ENCODE measurements at regions of chr19 and their contacts with region 1.

Region 1: GRCh38 chr19:39328046-39328705 is 7.5 kb upstream of the LRFN1 start:
- DNase-seq: peak; percentile 86
- ATAC-seq: peak; percentile 72
- H3K4me3 Mint-ChIP-seq: no peak overlapping the region
- H3K27ac Mint-ChIP-seq: peak overlapping the region; percentile 34
- H3K4me1 Mint-ChIP-seq: peaks cover 32% of the 10 kb centered on the region
- H3K27me3 Mint-ChIP-seq: no peaks in the 10 kb centered on the region

Region 2: GRCh38 chr19:39119554-39120229 is 208.5 kb before region 1 on chr19:
- CTCF ChIA-PET with region 1: interaction called, 22 read pairs
- DNase-seq: no peak
- ATAC-seq: no peak
- H3K4me3 Mint-ChIP-seq: no peak overlapping the region
- H3K27ac Mint-ChIP-seq: no peak overlapping the region
- H3K4me1 Mint-ChIP-seq: peaks cover 12% of the 10 kb centered on the region
- H3K27me3 Mint-ChIP-seq: peaks cover 4% of the 10 kb centered on the region

Region 3: GRCh38 chr19:39212375-39212742 is 115.8 kb before region 1 on chr19:
- CTCF ChIA-PET with region 1: interaction called, 40 read pairs
- DNase-seq: peak; percentile 75
- ATAC-seq: peak; percentile 92
- H3K4me3 Mint-ChIP-seq: no peak overlapping the region
- H3K27ac Mint-ChIP-seq: no peak overlapping the region
- H3K4me1 Mint-ChIP-seq: no peaks in the 10 kb centered on the region
- H3K27me3 Mint-ChIP-seq: peaks cover 7% of the 10 kb centered on the region

Region 4: DNA sequence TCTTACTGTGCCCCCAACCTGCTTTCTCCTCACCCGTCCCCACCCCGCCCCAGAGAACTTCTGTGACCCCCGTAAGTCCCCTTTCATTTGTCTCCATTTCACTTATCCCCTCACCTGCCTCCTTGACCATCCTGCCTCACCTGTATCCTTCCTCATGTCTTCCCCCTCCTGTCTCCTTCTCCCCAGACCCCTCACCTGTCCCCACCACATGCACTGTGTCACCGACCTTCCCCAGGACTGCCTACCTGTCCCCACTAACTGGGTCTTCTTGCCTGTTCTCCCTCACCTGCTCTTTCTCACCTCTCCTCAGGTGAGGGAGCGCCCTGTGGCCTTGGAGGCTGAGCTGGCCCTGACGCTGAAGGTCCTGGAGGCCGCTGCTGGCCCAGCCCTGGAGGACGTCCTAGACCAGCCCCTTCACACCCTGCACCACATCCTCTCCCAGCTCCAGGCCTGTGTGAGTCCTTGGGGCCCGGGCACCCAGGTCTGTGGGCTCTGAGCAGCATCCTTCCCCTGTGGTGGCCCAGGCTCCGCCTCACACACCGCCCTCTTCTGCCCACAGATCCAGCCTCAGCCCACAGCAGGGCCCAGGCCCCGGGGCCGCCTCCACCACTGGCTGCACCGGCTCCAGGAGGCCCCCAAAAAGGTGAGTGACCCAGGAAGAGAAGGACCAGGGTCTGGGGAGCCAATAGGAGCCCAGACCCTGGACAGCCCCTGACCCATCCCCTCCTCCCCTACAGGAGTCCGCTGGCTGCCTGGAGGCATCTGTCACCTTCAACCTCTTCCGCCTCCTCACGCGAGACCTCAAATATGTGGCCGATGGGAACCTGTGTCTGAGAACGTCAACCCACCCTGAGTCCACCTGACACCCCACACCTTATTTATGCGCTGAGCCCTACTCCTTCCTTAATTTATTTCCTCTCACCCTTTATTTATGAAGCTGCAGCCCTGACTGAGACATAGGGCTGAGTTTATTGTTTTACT is 30.2 kb before region 1 on chr19:
- CTCF ChIA-PET with region 1: interaction called, 10 read pairs
- DNase-seq: peak; percentile 94
- ATAC-seq: peak; percentile 88
- H3K4me3 Mint-ChIP-seq: peak overlapping the region; percentile 67
- H3K27ac Mint-ChIP-seq: peak overlapping the region; percentile 83
- H3K4me1 Mint-ChIP-seq: peaks cover 51% of the 10 kb centered on the region
- H3K27me3 Mint-ChIP-seq: peaks cover 16% of the 10 kb centered on the region

Region 5: GRCh38 chr19:39351537-39352064 is 23.4 kb after region 1 on chr19:
- CTCF ChIA-PET with region 1: no interaction called
- DNase-seq: peak; percentile 76
- ATAC-seq: peak; percentile 96
- H3K4me3 Mint-ChIP-seq: no peak overlapping the region
- H3K27ac Mint-ChIP-seq: peak overlapping the region; percentile 83
- H3K4me1 Mint-ChIP-seq: peaks cover 50% of the 10 kb centered on the region
- H3K27me3 Mint-ChIP-seq: no peaks in the 10 kb centered on the region

Region 6: DNA sequence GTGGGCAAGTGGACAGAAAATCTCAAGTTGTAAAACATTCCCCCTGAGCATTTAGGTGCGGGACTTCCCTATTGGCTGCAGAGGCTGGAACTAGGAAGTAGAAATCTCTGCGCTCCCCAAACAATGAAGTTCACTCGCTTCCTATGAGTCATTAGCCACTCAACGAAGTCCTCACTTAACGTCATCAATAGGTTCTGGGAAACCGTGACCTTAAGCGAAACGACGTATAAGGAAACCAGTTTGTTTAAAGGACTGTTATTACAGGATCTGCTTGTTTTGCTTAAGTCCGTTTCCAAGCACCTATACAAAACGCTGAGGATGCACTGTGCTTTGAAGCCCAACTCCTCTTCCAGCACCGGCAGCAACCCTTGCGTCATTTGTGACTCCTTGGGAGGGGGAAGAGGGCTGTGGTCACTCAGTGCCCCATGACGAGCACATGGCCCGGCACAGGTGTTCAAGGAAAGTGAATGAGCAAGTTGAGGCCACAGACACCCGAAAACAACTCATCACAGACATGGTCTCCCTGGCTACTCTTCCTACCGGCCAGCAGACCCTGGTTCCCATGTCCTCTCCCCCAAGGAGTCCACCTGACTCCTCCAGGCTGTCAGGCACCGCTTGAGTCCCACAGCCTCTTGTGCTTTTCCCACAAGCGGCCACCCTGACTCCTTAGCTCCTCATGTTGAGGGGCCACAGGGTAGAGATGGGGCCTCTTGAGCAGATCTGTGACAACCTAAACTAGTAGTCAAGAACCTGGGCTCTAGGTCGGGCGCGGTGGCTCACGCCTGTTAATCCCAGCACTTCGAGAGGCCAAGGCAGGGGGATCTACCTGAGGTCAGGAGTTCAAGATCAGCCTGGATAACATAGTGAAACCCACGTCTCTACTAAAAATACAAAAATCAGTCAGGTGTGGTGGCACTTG is 102.8 kb after region 1 on chr19:
- CTCF ChIA-PET with region 1: no interaction called
- DNase-seq: peak; percentile 88
- ATAC-seq: peak; percentile 76
- H3K4me3 Mint-ChIP-seq: peak overlapping the region; percentile 54
- H3K27ac Mint-ChIP-seq: peak overlapping the region; percentile 93
- H3K4me1 Mint-ChIP-seq: peaks cover 47% of the 10 kb centered on the region
- H3K27me3 Mint-ChIP-seq: peaks cover 3% of the 10 kb centered on the region

Measured in activated CD8-positive, alpha-beta memory T cell treated with anti-CD3 and anti-CD28 coated beads, Interleukin-2, amount 10 ng/mL, durations not matched to agents 7 days and 5 days (primary cell).